ENCODE measurements at regions of chr1 and their contacts with region 1.

Region 1: DNA sequence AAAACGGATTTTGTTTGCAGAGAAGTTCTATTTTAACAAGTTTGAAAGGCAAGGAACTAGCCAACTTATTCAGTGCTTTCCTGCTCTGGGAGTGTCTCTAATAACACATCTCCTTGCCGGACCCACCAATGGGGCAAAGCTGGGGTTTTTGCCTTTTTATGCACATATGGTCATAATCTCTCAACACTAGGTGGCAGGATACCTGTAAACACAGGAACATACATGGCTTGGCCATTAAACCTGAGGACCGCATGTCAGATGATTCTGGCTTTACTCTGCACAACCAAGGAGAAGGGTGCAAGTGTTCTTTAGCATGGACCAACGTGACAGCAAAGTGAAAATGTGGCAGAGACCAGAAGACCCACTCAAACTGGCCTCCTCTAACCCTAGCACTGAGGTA is 4.9 kb downstream of the TMEM9 start:
- DNase-seq: no peak
- H3K4me3 ChIP-seq: no peak overlapping the region
- H3K27ac ChIP-seq: no peak overlapping the region
- H3K4me1 ChIP-seq: peaks cover 5% of the 10 kb centered on the region
- H3K27me3 ChIP-seq: no peaks in the 10 kb centered on the region
- CTCF ChIP-seq: peak; percentile 49

Region 2: DNA sequence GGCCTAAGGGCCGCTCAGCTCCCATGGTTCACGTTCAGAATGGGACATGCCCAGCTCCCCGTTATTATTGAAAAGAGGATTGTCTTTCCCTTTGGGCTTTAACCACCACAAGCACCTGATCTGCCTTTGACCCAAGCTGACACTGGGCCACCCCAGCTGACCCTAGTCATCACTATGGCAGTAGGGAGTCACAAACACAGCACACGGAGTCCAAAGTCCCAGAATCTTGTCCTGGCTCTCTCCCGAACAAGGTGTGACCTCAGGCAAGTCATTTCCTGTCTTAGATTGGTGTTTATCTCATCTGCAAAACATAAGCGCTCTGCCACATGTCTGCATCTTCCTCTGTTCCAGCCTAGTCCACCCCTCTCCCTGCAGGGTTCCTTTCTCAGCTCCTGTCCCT is 72.7 kb after region 1 on chr1:
- intact Hi-C with region 1: loop called (anchors 2 kb)
- DNase-seq: no peak
- H3K4me3 ChIP-seq: no peak overlapping the region
- H3K27ac ChIP-seq: no peak overlapping the region
- H3K4me1 ChIP-seq: no peaks in the 10 kb centered on the region
- H3K27me3 ChIP-seq: no peaks in the 10 kb centered on the region
- CTCF ChIP-seq: no peak